Vagina (tissue), 2 donors: ENCODE measurements at regions of chr1 and their contacts with region 1.

Region 1: GRCh38 chr1:236795035-236795756 is at the start of gene MTR:
- DNase-seq: peak; percentile 99
- H3K4me3 ChIP-seq: peak within 1 kb of the TSS; percentile 74 to 78
- H3K27ac ChIP-seq: peak within 1 kb of the TSS; percentile 54
- H3K4me1 ChIP-seq: peaks cover 24% of the 10 kb centered on the region
- H3K27me3 ChIP-seq: no peaks in the 10 kb centered on the region
- CTCF ChIP-seq: no peak
- POLR2A ChIP-seq: peak; percentile 17 to 83
- total RNA-seq, gene MTR: 19.9 TPM

Region 2: GRCh38 chr1:236603991-236604904 is 190.9 kb before region 1 on chr1 and contains the start of gene HEATR1:
- intact Hi-C with region 1: loop called (anchors 10 kb)
- DNase-seq: peak in 1 of 2 donors; percentile 96
- H3K4me3 ChIP-seq: peak within 1 kb of the TSS; percentile 70 to 93
- H3K27ac ChIP-seq: peak within 1 kb of the TSS; percentile 76
- H3K4me1 ChIP-seq: peaks cover 19% of the 10 kb centered on the region
- H3K27me3 ChIP-seq: no peaks in the 10 kb centered on the region
- CTCF ChIP-seq: no peak
- POLR2A ChIP-seq: no peak
- total RNA-seq, gene HEATR1: 24.1 TPM

Region 3: GRCh38 chr1:236677641-236678235 is 117.5 kb before region 1 on chr1:
- intact Hi-C with region 1: no loop called
- DNase-seq: no peak
- H3K4me3 ChIP-seq: no peak overlapping the region
- H3K27ac ChIP-seq: no peak overlapping the region
- H3K4me1 ChIP-seq: no peaks in the 10 kb centered on the region
- H3K27me3 ChIP-seq: no peaks in the 10 kb centered on the region
- CTCF ChIP-seq: no peak
- POLR2A ChIP-seq: no peak

Region 4: DNA sequence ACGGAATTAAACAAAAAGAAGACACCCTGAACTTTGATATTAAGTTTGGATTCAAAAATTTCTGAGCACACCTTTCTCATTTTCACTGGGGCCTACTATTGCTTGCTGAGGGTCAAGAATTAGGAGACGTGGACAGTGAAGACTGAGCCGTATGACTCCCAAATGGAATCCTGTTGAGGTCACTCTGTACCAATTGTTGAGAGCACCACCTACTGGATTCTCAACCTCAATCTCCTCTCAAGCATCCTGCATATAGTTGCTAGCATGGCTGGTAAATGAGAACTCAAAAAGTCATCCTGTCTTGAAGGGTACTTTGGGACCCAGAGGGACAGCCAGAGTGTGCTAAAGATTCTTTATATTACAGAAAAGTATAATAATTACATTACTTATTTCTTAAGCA is 20.3 kb before region 1 on chr1:
- intact Hi-C with region 1: loop called (anchors 1 kb)
- DNase-seq: no peak
- H3K4me3 ChIP-seq: no peak overlapping the region
- H3K27ac ChIP-seq: no peak overlapping the region
- H3K4me1 ChIP-seq: no peaks in the 10 kb centered on the region
- H3K27me3 ChIP-seq: no peaks in the 10 kb centered on the region
- CTCF ChIP-seq: no peak
- POLR2A ChIP-seq: no peak